Activated naive CD4-positive, alpha-beta T cell treated with anti-CD3 and anti-CD28 coated beads for 36 hours (primary cell): ENCODE measurements at regions of chr17 and their contacts with region 1.

Region 1: DNA sequence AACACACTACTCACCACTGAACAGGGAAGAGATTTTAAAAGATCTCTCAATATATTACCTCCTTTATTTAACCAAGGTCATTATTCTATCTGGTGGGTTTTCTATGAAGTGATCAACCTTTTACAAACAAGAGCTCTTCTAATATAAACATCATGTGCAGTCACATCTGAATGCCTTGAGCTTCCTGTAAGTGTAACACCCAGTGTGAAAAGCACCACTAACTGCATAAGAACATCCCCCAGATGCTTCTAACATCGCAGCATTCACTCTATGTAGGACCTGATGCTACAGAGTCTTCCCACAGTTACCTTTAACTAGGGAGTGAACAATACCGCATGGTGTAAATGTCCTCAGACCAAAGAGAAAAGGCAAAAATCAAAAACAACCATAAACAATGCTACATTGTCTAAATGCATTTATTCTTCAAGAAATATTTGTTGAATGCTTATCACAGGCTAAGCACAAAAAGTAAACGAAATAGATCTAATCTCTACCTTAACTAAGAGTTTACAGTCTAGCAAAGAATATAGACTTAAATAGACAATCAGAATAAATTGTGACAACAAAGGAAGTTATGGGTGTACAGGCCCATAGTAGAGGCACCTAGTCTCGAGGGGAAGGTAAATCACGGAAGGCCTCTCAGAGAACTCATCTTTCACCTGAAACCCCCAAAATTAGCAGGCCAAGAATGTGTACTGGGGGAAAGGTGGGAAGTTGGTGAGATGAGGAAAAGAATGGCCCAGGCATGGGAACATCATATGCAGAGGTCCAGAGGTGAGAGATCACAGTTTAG is 16.2 kb downstream of the SKAP1 start:
- DNase-seq: no peak
- H3K4me3 Mint-ChIP-seq: peak overlapping the region; percentile 10
- H3K27ac Mint-ChIP-seq: peak overlapping the region; percentile 81
- H3K4me1 Mint-ChIP-seq: peaks cover 89% of the 10 kb centered on the region
- H3K27me3 Mint-ChIP-seq: no peaks in the 10 kb centered on the region

Region 2: DNA sequence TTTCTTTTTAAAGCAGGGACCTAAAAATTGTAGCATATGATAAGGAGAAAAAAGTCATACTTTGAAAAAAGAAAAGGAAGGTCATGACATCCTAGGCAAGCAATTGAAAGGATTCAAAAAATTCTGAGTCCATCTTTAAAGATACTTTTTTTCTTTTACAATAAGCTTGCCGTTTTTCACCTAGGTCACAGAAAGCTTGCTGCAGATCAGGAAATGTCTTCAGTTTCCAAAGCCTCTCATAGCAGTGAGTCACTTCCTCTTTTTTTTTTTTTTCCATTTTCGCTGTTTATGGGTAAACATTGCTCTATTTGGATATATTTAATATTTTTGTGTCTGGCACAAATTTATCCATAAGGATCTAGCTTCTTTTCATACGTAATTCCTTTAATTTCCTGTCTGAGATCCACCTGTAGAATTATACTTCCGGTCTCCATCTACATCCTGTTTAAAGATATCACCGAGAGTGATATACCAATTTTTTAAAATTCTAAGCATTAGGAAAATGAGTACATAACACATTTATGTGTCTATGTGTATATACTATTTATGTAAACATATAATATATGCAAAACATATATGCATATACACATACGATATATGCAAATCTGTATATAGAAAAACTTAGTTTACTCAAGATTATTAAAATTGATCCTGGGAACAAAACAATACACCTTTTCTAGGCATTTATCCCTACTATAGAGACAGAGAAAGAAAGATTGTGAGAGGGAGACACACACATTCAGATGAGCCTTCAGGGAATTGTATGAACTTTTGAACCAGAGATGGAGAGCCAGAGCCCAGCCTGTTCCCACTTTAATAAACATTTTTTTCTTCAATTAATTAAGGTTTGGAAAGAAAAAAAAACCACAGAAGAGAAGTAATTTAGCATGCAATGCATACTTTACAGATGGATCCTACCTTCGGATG is 118.2 kb before region 1 on chr17:
- CTCF ChIA-PET with region 1: no interaction called
- intact Hi-C with region 1: loop called (anchors 2 kb)
- DNase-seq: no peak
- H3K4me3 Mint-ChIP-seq: peak overlapping the region; percentile 64
- H3K27ac Mint-ChIP-seq: peak overlapping the region; percentile 87
- H3K4me1 Mint-ChIP-seq: peaks cover 66% of the 10 kb centered on the region
- H3K27me3 Mint-ChIP-seq: no peaks in the 10 kb centered on the region

Region 3: GRCh38 chr17:48391444-48391843 is 22.4 kb before region 1 on chr17:
- CTCF ChIA-PET with region 1: interaction called, 3 read pairs
- intact Hi-C with region 1: loop called (anchors 1 kb)
- DNase-seq: no peak
- H3K4me3 Mint-ChIP-seq: no peak overlapping the region
- H3K27ac Mint-ChIP-seq: no peak overlapping the region
- H3K4me1 Mint-ChIP-seq: peaks cover 53% of the 10 kb centered on the region
- H3K27me3 Mint-ChIP-seq: no peaks in the 10 kb centered on the region

Region 4: GRCh38 chr17:48429638-48430586 is 16.1 kb after region 1 on chr17 and contains the start of gene SKAP1:
- CTCF ChIA-PET with region 1: interaction called, 9 read pairs
- intact Hi-C with region 1: loop called (anchors 1 kb)
- DNase-seq: peak; percentile 60
- H3K4me3 Mint-ChIP-seq: peak within 1 kb of the TSS; percentile 95
- H3K27ac Mint-ChIP-seq: peak within 1 kb of the TSS; percentile 96
- H3K4me1 Mint-ChIP-seq: peaks cover 65% of the 10 kb centered on the region
- H3K27me3 Mint-ChIP-seq: no peaks in the 10 kb centered on the region
- total RNA-seq, gene SKAP1: 60.3 to 60.5 TPM

Region 5: DNA sequence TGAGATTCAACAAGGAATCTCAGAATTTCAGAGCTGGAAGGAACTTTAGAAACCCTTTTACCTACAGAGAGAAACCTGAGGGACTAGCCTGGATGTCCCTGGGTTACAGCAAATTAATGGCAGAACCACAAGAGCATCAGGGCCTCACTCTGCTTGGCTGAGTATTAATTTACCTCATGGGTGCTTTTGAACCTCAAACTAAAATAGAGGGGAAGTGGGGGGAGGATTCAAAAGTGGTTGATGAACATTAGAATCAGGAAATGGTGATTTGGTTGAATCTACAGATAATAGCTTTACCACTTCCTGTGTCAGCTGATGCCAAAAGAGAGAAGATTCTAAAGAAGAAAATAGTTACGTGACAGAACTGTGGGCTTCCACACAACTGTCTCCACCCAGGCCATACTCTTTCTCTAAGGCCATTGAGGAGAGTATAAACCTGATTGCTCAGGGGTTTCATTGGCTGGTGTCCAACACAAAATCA is 27.5 kb after region 1 on chr17:
- CTCF ChIA-PET with region 1: interaction called, 5 read pairs
- intact Hi-C with region 1: loop called (anchors 1 kb)
- DNase-seq: peak; percentile 60
- H3K4me3 Mint-ChIP-seq: peak overlapping the region; percentile 17
- H3K27ac Mint-ChIP-seq: peak overlapping the region; percentile 92
- H3K4me1 Mint-ChIP-seq: peaks cover 93% of the 10 kb centered on the region
- H3K27me3 Mint-ChIP-seq: no peaks in the 10 kb centered on the region

Region 6: DNA sequence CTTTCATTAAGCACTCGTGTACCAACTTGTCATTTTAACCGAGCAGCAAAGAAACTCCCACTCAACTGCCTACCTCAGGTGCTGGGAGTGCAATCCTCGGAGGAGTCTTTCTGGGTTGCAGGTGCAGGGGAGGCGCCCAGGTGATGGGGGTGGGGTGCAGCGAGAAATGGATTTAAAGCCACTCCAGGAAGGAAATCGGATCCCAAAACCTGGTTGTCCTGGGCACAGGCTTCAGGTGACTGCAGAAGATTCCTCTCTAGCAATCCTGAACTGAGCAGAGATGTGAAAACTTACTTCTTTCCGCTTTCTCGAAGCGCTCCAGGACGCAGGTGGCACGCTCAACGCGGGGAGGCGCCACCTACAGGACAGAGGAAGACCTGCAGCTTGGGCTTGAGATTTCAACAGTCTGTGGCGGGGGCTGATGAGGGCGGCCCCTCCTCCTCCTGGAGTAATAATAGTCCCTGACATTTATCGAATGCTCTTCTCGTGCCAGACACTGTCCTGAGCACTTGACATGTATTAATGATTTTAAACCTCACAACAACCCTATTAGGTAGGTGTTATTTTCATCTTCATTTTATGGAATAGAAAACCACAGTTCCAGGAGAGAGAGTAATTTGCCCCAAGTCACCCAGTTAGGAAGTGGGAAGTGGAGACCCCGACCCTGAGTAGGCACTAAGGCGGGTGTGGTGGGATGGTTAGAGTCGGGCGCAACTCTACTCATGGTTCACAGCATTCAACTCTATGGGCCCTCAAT is 43.4 kb after region 1 on chr17:
- CTCF ChIA-PET with region 1: interaction called, 11 read pairs
- intact Hi-C with region 1: loop called (anchors 1 kb)
- DNase-seq: peak; percentile 83
- H3K4me3 Mint-ChIP-seq: peak overlapping the region; percentile 66
- H3K27ac Mint-ChIP-seq: no peak overlapping the region
- H3K4me1 Mint-ChIP-seq: peaks cover 47% of the 10 kb centered on the region
- H3K27me3 Mint-ChIP-seq: no peaks in the 10 kb centered on the region